H1 (cell line): ENCODE measurements at regions of chr2 and their contacts with region 1.

Region 1: GRCh38 chr2:112941753-112942658 is 31.0 kb downstream of the IL37 start:
- DNase-seq: peak; percentile 68 to 88
- H3K4me3 ChIP-seq: no peak overlapping the region
- H3K27ac ChIP-seq: no peak overlapping the region
- H3K4me1 ChIP-seq: no peaks in the 10 kb centered on the region
- H3K27me3 ChIP-seq: no peaks in the 10 kb centered on the region
- CTCF ChIP-seq: peak; percentile 94 to 97 (median 96)
- EP300 ChIP-seq: no peak
- POLR2A ChIP-seq: no peak
- RAD21 ChIP-seq: peak; percentile 90 to 91

Region 2: DNA sequence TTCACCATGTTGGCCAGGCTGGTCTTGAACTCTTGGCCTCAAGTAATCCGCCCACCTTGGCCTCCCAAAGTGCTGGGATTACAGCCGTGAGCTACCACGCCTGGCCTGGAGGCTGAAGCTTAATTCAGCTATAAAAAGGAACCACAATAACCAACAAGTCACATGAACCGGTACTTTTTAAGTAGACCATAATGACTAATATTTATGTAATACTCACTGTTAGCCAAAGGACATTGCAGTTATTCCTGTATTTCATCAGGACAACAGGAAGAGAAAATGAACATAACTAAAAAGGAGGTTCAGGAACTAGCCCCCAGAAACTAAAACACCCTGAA is 936.0 kb before region 1 on chr2:
- CTCF ChIA-PET with region 1: no interaction called
- POLR2A ChIA-PET with region 1: no interaction called
- DNase-seq: no peak
- H3K4me3 ChIP-seq: no peak overlapping the region
- H3K27ac ChIP-seq: no peak overlapping the region
- H3K4me1 ChIP-seq: no peaks in the 10 kb centered on the region
- H3K27me3 ChIP-seq: no peaks in the 10 kb centered on the region; a peak in 1 of 7 replicates
- CTCF ChIP-seq: no peak
- EP300 ChIP-seq: no peak
- POLR2A ChIP-seq: no peak
- RAD21 ChIP-seq: no peak

Region 3: DNA sequence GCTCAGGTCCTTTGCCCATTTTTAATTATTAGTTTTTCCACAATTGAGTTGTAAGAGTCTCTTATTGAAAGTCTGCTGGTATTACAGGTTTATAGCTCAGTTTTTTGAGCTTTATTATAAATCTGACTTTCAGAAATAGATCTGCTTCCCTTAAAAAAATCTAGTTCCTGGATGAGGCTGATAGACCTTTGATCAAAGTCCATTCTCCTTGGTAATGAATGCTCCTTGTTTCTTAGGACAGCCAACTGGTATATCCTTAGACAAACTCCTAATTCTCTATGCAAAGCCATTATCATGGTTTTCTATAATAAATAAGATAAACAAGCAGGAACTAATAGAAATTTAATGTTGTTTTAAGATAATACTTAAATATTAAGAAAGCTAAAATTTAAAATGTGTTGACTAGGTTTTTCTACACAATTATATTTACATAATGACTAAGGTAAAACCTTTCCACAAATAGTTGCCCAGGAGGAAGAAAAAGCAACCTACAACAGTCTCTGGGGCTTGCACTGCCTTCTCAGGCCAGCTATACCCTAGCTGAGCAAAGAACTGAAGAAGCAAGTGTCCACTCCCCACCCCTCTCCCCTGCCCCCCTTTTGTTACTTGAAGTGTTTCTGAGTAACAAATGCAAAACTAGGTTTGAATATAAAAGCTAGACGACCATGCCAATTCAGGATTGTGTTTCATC is 204.3 kb before region 1 on chr2:
- CTCF ChIA-PET with region 1: interaction called, 13 read pairs
- POLR2A ChIA-PET with region 1: no interaction called
- DNase-seq: no peak
- H3K4me3 ChIP-seq: no peak overlapping the region
- H3K27ac ChIP-seq: no peak overlapping the region
- H3K4me1 ChIP-seq: no peaks in the 10 kb centered on the region
- H3K27me3 ChIP-seq: no peaks in the 10 kb centered on the region
- CTCF ChIP-seq: no peak
- EP300 ChIP-seq: no peak
- POLR2A ChIP-seq: no peak
- RAD21 ChIP-seq: no peak

Region 4: DNA sequence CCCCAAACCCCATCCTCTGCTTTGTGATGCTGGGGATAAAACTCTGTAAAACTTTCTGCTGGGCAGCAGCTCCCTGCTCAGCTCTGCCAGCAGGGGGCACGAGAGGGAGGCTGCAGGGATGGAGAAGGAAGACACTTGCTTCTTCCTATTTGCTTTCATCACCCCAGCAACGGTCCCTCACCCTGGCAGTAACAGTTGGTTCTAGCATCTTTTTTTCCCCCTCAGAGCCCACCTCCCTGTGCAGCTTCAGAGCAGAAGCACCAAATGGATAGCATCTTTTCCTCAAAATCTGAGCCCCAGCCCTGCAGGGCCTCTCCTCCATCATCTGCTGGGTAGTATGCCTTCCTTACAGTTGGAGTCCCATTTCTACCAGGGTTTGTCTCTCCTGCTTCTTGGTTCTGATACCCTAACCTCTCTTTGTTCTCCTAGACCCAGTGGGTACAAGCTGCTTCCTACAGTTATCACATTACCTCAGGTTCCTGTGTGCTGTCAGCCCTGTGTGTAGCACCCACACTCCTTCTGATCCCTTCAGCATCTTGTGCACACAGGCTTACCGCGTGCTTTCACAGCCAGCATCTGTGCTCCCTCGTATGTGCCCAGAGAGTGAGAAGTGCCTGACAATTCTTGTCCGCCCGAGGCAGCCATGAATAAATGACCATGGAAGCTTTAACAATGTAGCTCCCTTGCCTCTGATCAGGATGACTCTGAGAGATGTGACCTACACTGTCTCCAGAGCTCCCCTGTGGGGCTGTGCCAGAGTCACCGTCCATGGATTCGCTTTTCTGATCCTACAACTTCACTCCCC is 192.0 kb before region 1 on chr2:
- CTCF ChIA-PET with region 1: interaction called, 54 read pairs
- POLR2A ChIA-PET with region 1: no interaction called
- DNase-seq: peak in 1 of 2 experiments; percentile 86
- H3K4me3 ChIP-seq: no peak overlapping the region
- H3K27ac ChIP-seq: peak overlapping the region; percentile 21; the same call in 1 of the 2 replicates
- H3K4me1 ChIP-seq: no peaks in the 10 kb centered on the region
- H3K27me3 ChIP-seq: no peaks in the 10 kb centered on the region
- CTCF ChIP-seq: peak; percentile 91 to 95 (median 92)
- EP300 ChIP-seq: no peak
- POLR2A ChIP-seq: no peak
- RAD21 ChIP-seq: peak; percentile 88 to 90

Region 5: GRCh38 chr2:112764071-112765044 is 177.6 kb before region 1 on chr2 and contains the start of gene CKAP2L:
- CTCF ChIA-PET with region 1: interaction called, 12 read pairs
- POLR2A ChIA-PET with region 1: no interaction called
- DNase-seq: peak; percentile 90 to 91
- H3K4me3 ChIP-seq: peak within 1 kb of the TSS; percentile 76 to 91 (median 86)
- H3K27ac ChIP-seq: no peak within 1 kb of the TSS
- H3K4me1 ChIP-seq: peaks cover 0 to 8% (median 3%) of the 10 kb centered on the region in 4 experiments; a peak in 3 of 7 replicates
- H3K27me3 ChIP-seq: no peaks in the 10 kb centered on the region
- CTCF ChIP-seq: no peak
- EP300 ChIP-seq: no peak
- POLR2A ChIP-seq: peak in 1 of 2 experiments; percentile 36; a peak in 1 of 3 replicates
- RAD21 ChIP-seq: no peak
- total RNA-seq, gene CKAP2L: 19.3 and 20.7 TPM in 2 replicates

Region 6: GRCh38 chr2:112920923-112921532 is 21.0 kb before region 1 on chr2:
- CTCF ChIA-PET with region 1: interaction called, 37 read pairs
- POLR2A ChIA-PET with region 1: no interaction called
- DNase-seq: no peak
- H3K4me3 ChIP-seq: no peak overlapping the region
- H3K27ac ChIP-seq: no peak overlapping the region
- H3K4me1 ChIP-seq: no peaks in the 10 kb centered on the region
- H3K27me3 ChIP-seq: no peaks in the 10 kb centered on the region
- CTCF ChIP-seq: no peak
- EP300 ChIP-seq: no peak
- POLR2A ChIP-seq: no peak
- RAD21 ChIP-seq: no peak

Region 7: GRCh38 chr2:112928856-112929255 is 13.2 kb before region 1 on chr2:
- CTCF ChIA-PET with region 1: interaction called, 37 read pairs
- POLR2A ChIA-PET with region 1: interaction called, 3 read pairs
- DNase-seq: no peak
- H3K4me3 ChIP-seq: no peak overlapping the region
- H3K27ac ChIP-seq: no peak overlapping the region
- H3K4me1 ChIP-seq: no peaks in the 10 kb centered on the region
- H3K27me3 ChIP-seq: no peaks in the 10 kb centered on the region
- CTCF ChIP-seq: no peak
- EP300 ChIP-seq: no peak
- POLR2A ChIP-seq: no peak
- RAD21 ChIP-seq: no peak

Region 8: GRCh38 chr2:112958428-112959108 is 16.6 kb after region 1 on chr2:
- CTCF ChIA-PET with region 1: interaction called, 45 read pairs
- POLR2A ChIA-PET with region 1: no interaction called
- DNase-seq: peak in 1 of 2 experiments; percentile 49
- H3K4me3 ChIP-seq: no peak overlapping the region
- H3K27ac ChIP-seq: no peak overlapping the region
- H3K4me1 ChIP-seq: no peaks in the 10 kb centered on the region
- H3K27me3 ChIP-seq: no peaks in the 10 kb centered on the region; a peak in 1 of 7 replicates
- CTCF ChIP-seq: peak in 2 of 3 experiments; percentile 75 to 77; a peak in 3 of 4 replicates
- EP300 ChIP-seq: no peak
- POLR2A ChIP-seq: no peak
- RAD21 ChIP-seq: peak; percentile 56 to 72